ENCODE measurements at regions of chr12 and their contacts with region 1.

Region 1: DNA sequence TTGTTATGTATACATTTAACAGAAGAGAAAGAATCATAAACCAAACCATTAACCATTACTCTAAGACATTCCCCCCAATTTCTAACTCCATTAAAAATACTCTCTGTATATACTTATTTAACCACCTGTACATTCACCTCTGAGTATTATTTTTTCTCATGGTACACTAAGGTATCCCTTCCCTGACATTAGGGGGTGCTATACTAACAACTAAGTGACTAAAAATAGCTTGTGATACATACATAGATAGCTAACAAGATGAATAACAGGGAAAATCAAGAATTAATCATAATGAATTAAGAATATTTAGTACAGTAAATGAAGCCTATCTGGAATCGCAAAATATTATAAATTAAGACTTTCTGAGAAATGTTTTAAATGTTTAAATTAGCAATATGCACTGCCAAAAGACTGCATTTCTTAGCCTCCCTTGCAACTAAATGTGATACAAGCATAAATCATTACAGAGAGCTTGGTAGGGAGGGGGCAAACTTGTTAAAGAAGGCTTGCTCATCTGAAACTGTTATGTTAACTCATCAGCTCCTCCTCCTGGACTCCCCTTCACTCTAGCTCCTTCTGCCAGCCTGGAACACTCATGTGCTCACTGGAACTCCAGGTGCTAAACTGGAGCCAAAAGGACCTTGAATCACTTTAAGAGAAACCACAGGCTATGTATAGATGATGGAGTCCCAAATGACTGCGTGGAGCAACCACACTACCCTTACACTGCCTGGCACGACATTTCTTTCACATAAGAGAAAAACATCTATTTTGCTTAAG is 14.9 kb downstream of the C2CD5 start:
- DNase-seq: no peak
- ATAC-seq: peak; percentile 87
- H3K4me3 ChIP-seq: no peak overlapping the region
- H3K27ac ChIP-seq: no peak overlapping the region
- H3K4me1 ChIP-seq: no peaks in the 10 kb centered on the region
- H3K27me3 ChIP-seq: no peaks in the 10 kb centered on the region
- CTCF ChIP-seq: peak; percentile 29 to 66 (median 50); a peak in 5 of 6 replicates
- POLR2A ChIP-seq: no peak
- RAD21 ChIP-seq: peak; percentile 49

Region 2: GRCh38 chr12:22415342-22416309 is 113.8 kb before region 1 on chr12:
- CTCF ChIA-PET with region 1: no interaction called
- POLR2A ChIA-PET with region 1: no interaction called
- RAD21 ChIA-PET with region 1: no interaction called
- intact Hi-C with region 1: no loop called
- DNase-seq: no peak
- ATAC-seq: no peak
- H3K4me3 ChIP-seq: no peak overlapping the region
- H3K27ac ChIP-seq: no peak overlapping the region
- H3K4me1 ChIP-seq: no peaks in the 10 kb centered on the region
- H3K27me3 ChIP-seq: no peaks in the 10 kb centered on the region
- CTCF ChIP-seq: no peak
- POLR2A ChIP-seq: no peak
- RAD21 ChIP-seq: no peak

Region 3: GRCh38 chr12:22477166-22477893 is 52.1 kb before region 1 on chr12:
- CTCF ChIA-PET with region 1: no interaction called
- POLR2A ChIA-PET with region 1: no interaction called
- RAD21 ChIA-PET with region 1: no interaction called
- intact Hi-C with region 1: no loop called
- DNase-seq: no peak
- ATAC-seq: no peak
- H3K4me3 ChIP-seq: no peak overlapping the region
- H3K27ac ChIP-seq: no peak overlapping the region
- H3K4me1 ChIP-seq: no peaks in the 10 kb centered on the region
- H3K27me3 ChIP-seq: no peaks in the 10 kb centered on the region
- CTCF ChIP-seq: no peak
- POLR2A ChIP-seq: no peak
- RAD21 ChIP-seq: no peak

Region 4: GRCh38 chr12:22518067-22518719 is 11.3 kb before region 1 on chr12:
- CTCF ChIA-PET with region 1: interaction called, 13 read pairs
- POLR2A ChIA-PET with region 1: no interaction called
- RAD21 ChIA-PET with region 1: no interaction called
- intact Hi-C with region 1: no loop called
- DNase-seq: no peak
- ATAC-seq: no peak
- H3K4me3 ChIP-seq: no peak overlapping the region
- H3K27ac ChIP-seq: no peak overlapping the region
- H3K4me1 ChIP-seq: no peaks in the 10 kb centered on the region; a peak in 1 of 4 replicates
- H3K27me3 ChIP-seq: no peaks in the 10 kb centered on the region
- CTCF ChIP-seq: no peak
- POLR2A ChIP-seq: no peak
- RAD21 ChIP-seq: no peak

Region 5: GRCh38 chr12:22631863-22632463 is 102.5 kb after region 1 on chr12:
- CTCF ChIA-PET with region 1: no interaction called
- POLR2A ChIA-PET with region 1: no interaction called
- RAD21 ChIA-PET with region 1: no interaction called
- intact Hi-C with region 1: loop called (anchors 5 kb)
- DNase-seq: no peak
- ATAC-seq: no peak
- H3K4me3 ChIP-seq: no peak overlapping the region
- H3K27ac ChIP-seq: no peak overlapping the region
- H3K4me1 ChIP-seq: 0 out of 4 replicates have a peak, but pooled peaks cover 0 to 4% of the 10 kb centered on the region in 2 experiments
- H3K27me3 ChIP-seq: no peaks in the 10 kb centered on the region
- CTCF ChIP-seq: peak; percentile 35 to 68 (median 40); a peak in 4 of 6 replicates
- POLR2A ChIP-seq: no peak
- RAD21 ChIP-seq: peak; percentile 50; the same call in 1 of the 2 replicates

Measured in HCT116 (cell line).